PC-3 (cell line): ENCODE measurements at regions of chr7 and their contacts with region 1.

Region 1: DNA sequence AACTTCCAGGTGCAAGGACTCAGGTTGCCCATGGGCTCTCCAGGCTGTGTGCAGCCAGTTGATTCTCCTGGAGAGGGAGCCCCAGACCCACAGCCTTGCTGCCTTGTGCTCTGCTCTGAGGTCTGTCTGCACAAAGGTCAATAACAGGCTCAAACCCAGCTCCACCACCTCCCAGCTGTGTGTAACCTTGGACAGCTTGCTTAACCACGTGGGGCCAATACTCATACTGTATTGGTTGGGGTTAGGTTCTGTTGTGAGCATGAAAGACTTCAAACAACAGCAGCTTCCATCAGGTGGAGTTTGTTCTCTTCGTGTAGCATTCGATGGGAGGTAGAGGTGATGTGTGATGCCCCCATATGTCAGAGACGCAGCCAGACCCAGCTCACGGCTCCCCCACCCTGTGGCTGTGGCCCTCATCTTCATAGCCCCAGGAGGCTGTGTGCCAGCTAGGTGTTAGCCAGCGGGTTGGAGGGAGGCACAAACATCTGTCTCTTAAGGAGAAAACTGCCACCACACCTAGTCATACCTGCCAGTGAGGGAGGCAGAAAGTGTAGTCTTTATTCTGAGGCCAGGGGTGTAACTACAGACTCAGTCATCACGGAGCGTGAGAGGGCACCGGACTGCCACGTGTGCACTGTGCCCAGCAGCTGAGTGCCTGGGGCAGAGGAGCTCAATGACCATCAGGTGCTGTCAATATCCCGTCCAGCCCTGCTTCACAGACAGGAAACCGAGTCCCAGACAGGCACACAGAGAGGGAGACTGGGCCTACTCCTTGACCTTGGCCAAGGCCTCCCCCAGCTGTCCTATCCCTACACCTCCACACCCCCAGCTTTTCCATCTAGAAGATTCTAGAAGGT is 8.1 kb upstream of the POLD2 start:
- DNase-seq: peak; percentile 44
- ATAC-seq: peak; percentile 92
- H3K4me3 ChIP-seq: no peak overlapping the region
- H3K27ac ChIP-seq: no peak overlapping the region
- H3K4me1 ChIP-seq: no peaks in the 10 kb centered on the region; the same call in 1 of the 2 replicates
- H3K27me3 ChIP-seq: no peaks in the 10 kb centered on the region
- CTCF ChIP-seq: peak; percentile 60

Region 2: DNA sequence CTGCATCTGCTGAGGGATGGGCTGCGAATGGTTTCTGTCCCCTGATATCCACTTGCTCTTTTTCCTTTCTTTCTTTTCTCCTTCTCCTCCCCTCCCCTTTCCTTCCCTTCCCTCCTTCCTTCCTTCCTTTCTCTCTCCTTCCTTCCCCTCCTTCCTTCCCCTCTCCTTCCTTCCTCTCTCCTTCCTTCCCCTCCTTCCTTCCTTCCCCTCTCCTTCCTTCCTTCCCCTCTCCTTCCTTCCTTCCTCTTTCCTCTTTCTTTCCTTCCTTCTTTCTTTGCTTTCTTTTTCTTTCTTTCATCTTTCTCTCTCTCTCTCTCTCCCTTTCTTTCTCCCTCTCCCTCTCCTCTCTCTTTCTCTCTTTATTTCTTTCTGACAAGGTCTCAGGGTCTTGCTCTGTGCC is 153.9 kb before region 1 on chr7:
- CTCF ChIA-PET with region 1: no interaction called
- POLR2A ChIA-PET with region 1: interaction called, 10 read pairs
- intact Hi-C with region 1: no loop called
- DNase-seq: no peak
- ATAC-seq: no peak
- H3K4me3 ChIP-seq: no peak overlapping the region
- H3K27ac ChIP-seq: no peak overlapping the region
- H3K4me1 ChIP-seq: no peaks in the 10 kb centered on the region
- H3K27me3 ChIP-seq: no peaks in the 10 kb centered on the region
- CTCF ChIP-seq: no peak

Region 3: GRCh38 chr7:44196450-44196872 is 65.1 kb after region 1 on chr7:
- CTCF ChIA-PET with region 1: interaction called, 4 read pairs
- POLR2A ChIA-PET with region 1: no interaction called
- intact Hi-C with region 1: loop called (anchors 1 kb)
- DNase-seq: peak; percentile 66
- ATAC-seq: peak; percentile 41
- H3K4me3 ChIP-seq: no peak overlapping the region
- H3K27ac ChIP-seq: no peak overlapping the region
- H3K4me1 ChIP-seq: peaks cover 8% of the 10 kb centered on the region
- H3K27me3 ChIP-seq: no peaks in the 10 kb centered on the region
- CTCF ChIP-seq: peak; percentile 81